Spleen (tissue), 13 donors: ENCODE measurements at regions of chr12 and their contacts with region 1.

Region 1: DNA sequence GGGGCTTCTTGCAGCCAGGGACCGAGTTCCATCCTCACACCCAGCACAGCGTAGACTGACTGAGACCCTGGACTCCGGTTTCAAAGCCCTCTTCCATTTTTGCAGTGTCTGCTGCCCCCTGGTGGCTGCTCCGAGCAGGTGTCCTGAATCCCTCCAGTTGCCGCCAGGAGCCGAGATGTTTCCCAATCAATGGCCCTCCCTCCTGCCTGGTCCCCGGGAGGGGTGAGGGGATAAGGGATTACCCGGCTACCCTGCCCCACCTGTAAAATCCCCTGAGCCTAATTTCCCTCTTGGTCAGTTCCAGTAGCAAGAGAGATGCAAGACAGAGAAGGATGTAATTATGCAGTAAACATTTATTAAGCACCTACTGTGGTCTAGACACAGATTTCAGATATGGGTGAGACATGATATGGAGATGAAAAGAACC is 55.0 kb downstream of the PHETA1 start:
- DNase-seq: peak; percentile 90
- H3K4me3 ChIP-seq: no peak overlapping the region
- H3K27ac ChIP-seq: no peak overlapping the region
- H3K4me1 ChIP-seq: peaks cover 0 to 18% (median 2%) of the 10 kb centered on the region in 6 donors
- H3K27me3 ChIP-seq: peaks cover 0 to 48% (median 0%) of the 10 kb centered on the region in 7 donors
- CTCF ChIP-seq: peak; percentile 77 to 94 (median 89)
- POLR2A ChIP-seq: no peak

Region 2: DNA sequence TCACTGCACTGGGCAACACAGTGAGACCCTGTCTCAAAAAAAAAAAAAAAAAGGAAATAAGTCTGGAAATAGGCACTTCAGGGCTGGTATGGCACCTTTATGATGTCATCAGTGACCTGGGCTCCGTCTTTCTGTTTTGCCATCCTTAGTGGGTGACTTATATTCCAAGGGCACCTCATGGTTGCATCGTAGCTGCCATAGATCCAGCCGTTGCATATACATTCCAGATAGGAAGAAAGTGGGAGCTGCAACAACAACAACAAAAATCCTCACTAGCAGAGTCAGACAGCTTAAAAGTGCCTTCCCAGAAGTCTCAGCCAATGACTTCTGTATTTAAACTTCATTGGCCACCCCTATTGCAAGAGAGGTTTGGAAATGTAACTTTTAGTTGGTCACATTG is 419.9 kb before region 1 on chr12:
- intact Hi-C with region 1: loop called (anchors 5 kb)
- DNase-seq: peak; percentile 11
- H3K4me3 ChIP-seq: peak overlapping the region in 1 of 8 donors; percentile 52
- H3K27ac ChIP-seq: no peak overlapping the region
- H3K4me1 ChIP-seq: peaks cover 5 to 11% (median 9%) of the 10 kb centered on the region in 6 donors
- H3K27me3 ChIP-seq: peaks cover 0 to 12% (median 0%) of the 10 kb centered on the region in 7 donors
- CTCF ChIP-seq: no peak
- POLR2A ChIP-seq: no peak

Region 3: GRCh38 chr12:110937104-110937641 is 376.7 kb before region 1 on chr12:
- intact Hi-C with region 1: loop called (anchors 5 kb)
- DNase-seq: peak; percentile 89
- H3K4me3 ChIP-seq: peak overlapping the region in 1 of 8 donors; percentile 16
- H3K27ac ChIP-seq: no peak overlapping the region
- H3K4me1 ChIP-seq: peaks cover 0 to 9% (median 8%) of the 10 kb centered on the region in 6 donors
- H3K27me3 ChIP-seq: peaks cover 0 to 57% (median 9%) of the 10 kb centered on the region in 7 donors
- CTCF ChIP-seq: peak; percentile 71 to 95 (median 91)
- POLR2A ChIP-seq: no peak

Region 4: GRCh38 chr12:111369496-111370220 is 55.8 kb after region 1 on chr12:
- intact Hi-C with region 1: no loop called
- DNase-seq: no peak
- H3K4me3 ChIP-seq: peak overlapping the region; percentile 74 to 98 (median 88)
- H3K27ac ChIP-seq: peak overlapping the region in 7 of 8 donors; percentile 15 to 88 (median 84)
- H3K4me1 ChIP-seq: peaks cover 8 to 58% (median 40%) of the 10 kb centered on the region in 6 donors
- H3K27me3 ChIP-seq: no peaks in the 10 kb centered on the region
- CTCF ChIP-seq: no peak
- POLR2A ChIP-seq: no peak

Region 5: GRCh38 chr12:112046003-112046402 is 732.2 kb after region 1 on chr12:
- intact Hi-C with region 1: no loop called
- DNase-seq: no peak
- H3K4me3 ChIP-seq: no peak overlapping the region
- H3K27ac ChIP-seq: no peak overlapping the region
- H3K4me1 ChIP-seq: peaks cover 0 to 14% (median 8%) of the 10 kb centered on the region in 6 donors
- H3K27me3 ChIP-seq: no peaks in the 10 kb centered on the region
- CTCF ChIP-seq: no peak
- POLR2A ChIP-seq: no peak